Activated CD8-positive, alpha-beta memory T cell treated with anti-CD3 and anti-CD28 coated beads, Interleukin-2, amount 10 ng/mL, durations not matched to agents 7 days and 5 days (primary cell): ENCODE measurements at regions of chr10 and their contacts with region 1.

Region 1: DNA sequence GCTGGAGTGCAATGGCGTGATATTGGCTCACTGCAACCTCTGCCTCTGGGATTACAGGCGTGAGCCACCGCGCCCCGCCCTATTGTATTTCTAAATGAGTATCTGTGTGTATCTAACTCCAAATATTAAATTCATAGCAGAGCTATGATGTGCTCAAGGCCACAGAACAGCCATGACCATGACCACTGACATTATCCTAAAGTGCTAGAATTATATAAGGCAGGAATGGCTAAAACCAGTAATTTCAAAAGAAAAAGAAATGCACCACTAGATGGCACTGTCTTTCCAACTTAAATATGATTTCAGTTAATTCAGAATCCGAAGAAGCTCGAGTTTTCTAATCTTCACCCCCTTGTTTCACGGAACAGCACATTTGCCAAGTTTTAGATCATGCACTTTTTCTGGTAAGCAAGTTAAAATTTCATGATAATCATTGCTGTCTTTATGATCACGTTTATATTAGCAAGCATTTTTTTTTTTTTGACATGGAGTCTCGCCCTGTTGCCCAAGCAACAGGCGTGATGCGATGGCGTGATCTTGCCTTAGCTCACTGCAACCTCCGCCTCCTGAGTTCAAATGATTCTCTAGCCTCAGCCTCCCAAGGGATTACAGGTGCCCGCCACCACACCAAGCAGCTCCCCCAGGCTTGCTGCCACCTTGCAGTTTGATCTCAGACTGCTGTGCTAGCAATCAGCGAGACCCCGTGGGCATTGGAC is 65.3 kb downstream of the OR13A1 start:
- DNase-seq: no peak
- ATAC-seq: peak; percentile 63
- H3K4me3 Mint-ChIP-seq: peak overlapping the region; percentile 38
- H3K27ac Mint-ChIP-seq: peak overlapping the region; percentile 20
- H3K4me1 Mint-ChIP-seq: peaks cover 18% of the 10 kb centered on the region
- H3K27me3 Mint-ChIP-seq: peaks cover 21% of the 10 kb centered on the region

Region 2: GRCh38 chr10:45235798-45236231 is 14.3 kb before region 1 on chr10:
- CTCF ChIA-PET with region 1: interaction called, 22 read pairs
- DNase-seq: no peak
- ATAC-seq: no peak
- H3K4me3 Mint-ChIP-seq: no peak overlapping the region
- H3K27ac Mint-ChIP-seq: no peak overlapping the region
- H3K4me1 Mint-ChIP-seq: peaks cover 16% of the 10 kb centered on the region
- H3K27me3 Mint-ChIP-seq: peaks cover 17% of the 10 kb centered on the region

Region 3: GRCh38 chr10:45672181-45673073 is 422.3 kb after region 1 on chr10 and contains the start of gene ZFAND4:
- CTCF ChIA-PET with region 1: interaction called, 10 read pairs
- DNase-seq: peak; percentile 98
- ATAC-seq: peak; percentile 98
- H3K4me3 Mint-ChIP-seq: peak within 1 kb of the TSS; percentile 86
- H3K27ac Mint-ChIP-seq: peak within 1 kb of the TSS; percentile 89
- H3K4me1 Mint-ChIP-seq: peaks cover 35% of the 10 kb centered on the region
- H3K27me3 Mint-ChIP-seq: no peaks in the 10 kb centered on the region
- total RNA-seq, gene ZFAND4: 15.7 to 21.1 TPM